ENCODE measurements at regions of chr3 and their contacts with region 1.

Region 1: GRCh38 chr3:116524453-116525210 is 79.3 kb upstream of the LSAMP start:
- DNase-seq: no peak
- H3K4me3 ChIP-seq: no peak overlapping the region
- H3K27ac ChIP-seq: no peak overlapping the region
- H3K4me1 ChIP-seq: no peaks in the 10 kb centered on the region
- H3K27me3 ChIP-seq: no peaks in the 10 kb centered on the region
- CTCF ChIP-seq: no peak

Region 2: DNA sequence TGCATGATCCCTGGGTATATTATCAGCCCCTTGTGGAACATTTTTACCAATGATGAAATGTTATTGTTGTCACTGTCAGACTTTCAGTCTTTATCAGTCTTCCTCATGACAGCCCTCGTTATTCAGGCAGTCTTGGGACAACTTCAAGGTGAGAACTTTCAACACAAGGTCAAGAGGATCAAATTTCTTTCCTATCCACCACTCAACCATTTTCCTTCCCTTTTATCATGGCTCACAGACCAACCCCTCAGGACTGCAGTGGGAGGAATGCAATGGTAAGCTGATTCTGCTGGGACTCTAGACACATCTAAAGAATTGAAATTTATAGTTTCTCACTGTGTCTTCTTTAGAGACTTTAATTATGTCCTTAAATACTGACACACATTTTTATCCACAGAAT is 27.6 kb after region 1 on chr3:
- CTCF ChIA-PET with region 1: no interaction called
- POLR2A ChIA-PET with region 1: no interaction called
- intact Hi-C with region 1: loop called (anchors 2 kb)
- DNase-seq: no peak
- H3K4me3 ChIP-seq: no peak overlapping the region
- H3K27ac ChIP-seq: no peak overlapping the region
- H3K4me1 ChIP-seq: no peaks in the 10 kb centered on the region
- H3K27me3 ChIP-seq: no peaks in the 10 kb centered on the region
- CTCF ChIP-seq: no peak

Region 3: DNA sequence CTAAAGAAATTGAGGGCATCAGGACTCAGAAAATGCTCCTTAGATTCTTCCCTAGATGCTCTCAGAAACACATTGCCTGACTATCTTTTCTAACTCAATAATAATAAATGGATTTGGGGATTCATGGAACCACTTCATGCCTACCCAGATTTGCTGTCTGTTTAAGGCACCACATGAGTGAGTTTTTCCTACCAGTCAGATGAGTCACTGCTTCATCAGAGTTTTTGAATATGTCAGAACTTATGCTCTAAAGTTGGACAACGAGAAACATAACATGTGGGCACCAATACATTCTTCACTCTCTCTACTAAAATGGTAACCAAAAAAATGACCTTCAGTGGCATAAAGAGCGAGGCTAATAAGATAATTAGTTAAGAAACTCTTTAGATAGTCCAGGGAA is 1320.0 kb after region 1 on chr3:
- CTCF ChIA-PET with region 1: no interaction called
- POLR2A ChIA-PET with region 1: no interaction called
- intact Hi-C with region 1: no loop called
- DNase-seq: no peak
- H3K4me3 ChIP-seq: no peak overlapping the region
- H3K27ac ChIP-seq: no peak overlapping the region
- H3K4me1 ChIP-seq: peaks cover 4% of the 10 kb centered on the region
- H3K27me3 ChIP-seq: peaks cover 16% of the 10 kb centered on the region
- CTCF ChIP-seq: no peak